ENCODE measurements at regions of chr12 and their contacts with region 1.

Region 1: DNA sequence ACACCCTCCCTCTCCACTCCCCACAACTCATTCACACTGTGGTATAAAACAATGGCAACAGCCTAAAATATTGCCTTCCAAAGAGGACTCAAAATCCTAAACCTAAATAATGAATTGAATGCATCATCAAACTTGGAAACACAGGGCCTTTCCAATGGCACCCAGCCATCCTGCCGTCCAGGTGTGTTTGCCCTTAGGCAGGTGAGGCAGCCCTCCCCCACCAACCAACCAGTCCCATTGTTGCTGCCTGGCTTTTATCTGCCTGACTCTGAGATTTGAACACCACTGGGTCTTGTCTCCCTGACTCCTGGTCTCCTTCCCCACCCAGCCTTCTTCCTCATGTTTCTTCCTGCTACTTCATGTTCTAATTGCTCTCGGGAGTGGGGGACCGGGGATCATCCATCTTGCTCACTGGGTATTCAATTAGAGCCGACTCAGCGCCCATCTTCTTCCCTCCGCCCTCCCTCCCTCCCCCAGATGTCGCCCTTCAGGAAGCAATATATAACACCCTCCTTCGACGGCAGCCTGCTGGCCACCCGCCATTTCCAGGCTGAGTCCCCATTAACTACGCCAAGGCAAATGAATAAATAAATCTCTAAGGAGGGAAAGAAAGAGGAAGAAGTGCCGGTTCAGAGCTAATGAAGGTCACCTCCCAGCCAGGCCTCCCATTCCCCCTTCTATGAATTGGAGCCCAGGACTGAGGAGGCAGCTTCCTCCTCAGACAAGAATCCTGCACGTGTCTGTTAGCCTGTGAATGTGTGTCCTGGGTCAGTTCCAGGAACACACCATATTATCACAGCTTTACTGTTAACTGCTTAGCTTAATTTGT is 36.3 kb upstream of the NTF3 start:
- DNase-seq: no peak
- ATAC-seq: no peak
- H3K4me3 ChIP-seq: no peak overlapping the region
- H3K27ac ChIP-seq: no peak overlapping the region
- H3K4me1 ChIP-seq: no peaks in the 10 kb centered on the region
- H3K27me3 ChIP-seq: peaks cover 0 to 4% of the 10 kb centered on the region in 2 experiments; a peak in 1 of 5 replicates
- CTCF ChIP-seq: no peak
- EP300 ChIP-seq: no peak
- POLR2A ChIP-seq: no peak
- RAD21 ChIP-seq: no peak

Region 2: GRCh38 chr12:5294274-5295070 is 101.2 kb before region 1 on chr12:
- CTCF ChIA-PET with region 1: no interaction called
- POLR2A ChIA-PET with region 1: no interaction called
- in situ Hi-C with region 1: no loop called
- intact Hi-C with region 1: no loop called
- DNase-seq: no peak
- ATAC-seq: no peak
- H3K4me3 ChIP-seq: no peak overlapping the region
- H3K27ac ChIP-seq: no peak overlapping the region
- H3K4me1 ChIP-seq: no peaks in the 10 kb centered on the region
- H3K27me3 ChIP-seq: no peaks in the 10 kb centered on the region; a peak in 1 of 5 replicates
- CTCF ChIP-seq: no peak
- EP300 ChIP-seq: no peak
- POLR2A ChIP-seq: no peak
- RAD21 ChIP-seq: no peak

Region 3: GRCh38 chr12:5417500-5417899 is 21.8 kb after region 1 on chr12:
- CTCF ChIA-PET with region 1: no interaction called
- POLR2A ChIA-PET with region 1: no interaction called
- in situ Hi-C with region 1: no loop called
- intact Hi-C with region 1: loop called (anchors 1 kb)
- DNase-seq: no peak
- ATAC-seq: no peak
- H3K4me3 ChIP-seq: no peak overlapping the region
- H3K27ac ChIP-seq: no peak overlapping the region
- H3K4me1 ChIP-seq: no peaks in the 10 kb centered on the region
- H3K27me3 ChIP-seq: no peaks in the 10 kb centered on the region
- CTCF ChIP-seq: no peak
- EP300 ChIP-seq: no peak
- POLR2A ChIP-seq: no peak
- RAD21 ChIP-seq: no peak

Measured in HepG2 (cell line).